ENCODE measurements at regions of chr13 and their contacts with region 1.

Region 1: GRCh38 chr13:57640582-57640981 is 9.0 kb downstream of the PCDH17 start:
- DNase-seq: no peak
- ATAC-seq: no peak

Region 2: GRCh38 chr13:56850852-56851251 is 789.7 kb before region 1 on chr13:
- intact Hi-C with region 1: no loop called
- DNase-seq: no peak
- ATAC-seq: no peak

Region 3: GRCh38 chr13:57507748-57508463 is 132.7 kb before region 1 on chr13:
- intact Hi-C with region 1: no loop called
- DNase-seq: no peak
- ATAC-seq: no peak

Region 4: DNA sequence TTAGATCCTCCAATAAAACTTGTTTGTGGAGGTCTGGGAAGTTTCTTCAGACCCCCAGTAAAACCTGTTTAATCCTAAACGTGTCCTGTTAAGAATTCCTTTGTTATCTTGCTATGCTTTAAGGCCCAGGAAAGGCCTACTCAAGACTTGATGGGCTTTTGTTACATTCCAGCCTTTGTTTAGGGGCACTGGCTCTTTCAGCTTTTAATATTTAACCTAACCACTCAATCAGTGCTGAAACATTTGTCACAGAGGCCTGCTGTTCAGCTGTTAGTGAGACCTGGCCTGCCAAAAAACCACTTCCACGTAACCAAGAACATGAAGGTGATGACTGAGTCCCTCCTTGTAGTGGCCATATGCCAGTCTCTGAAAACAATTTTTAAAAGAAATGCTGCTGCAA is 32.6 kb after region 1 on chr13:
- intact Hi-C with region 1: no loop called
- DNase-seq: no peak
- ATAC-seq: no peak

Region 5: DNA sequence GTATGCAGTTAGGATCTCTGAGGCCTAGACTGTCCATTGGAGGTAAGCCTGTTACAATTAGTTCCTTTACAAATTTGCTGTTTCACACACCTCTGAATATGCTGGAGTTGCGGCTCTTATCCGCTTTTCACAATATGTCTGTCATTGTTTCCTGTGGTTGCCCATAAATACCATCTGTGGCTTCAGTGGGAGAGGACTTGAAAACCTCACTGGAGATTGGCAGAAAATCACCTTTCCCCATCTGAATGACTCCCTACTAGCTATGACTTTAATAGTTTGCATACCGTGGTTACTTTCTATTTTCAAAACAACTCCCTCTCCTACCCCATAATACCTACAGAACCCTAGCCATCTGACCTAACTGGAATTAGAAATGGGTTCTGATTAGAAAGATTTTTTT is 445.2 kb after region 1 on chr13:
- intact Hi-C with region 1: no loop called
- DNase-seq: no peak
- ATAC-seq: no peak

Region 6: GRCh38 chr13:58884353-58885209 is 1244.0 kb after region 1 on chr13:
- intact Hi-C with region 1: loop called (anchors 5 kb)
- DNase-seq: no peak
- ATAC-seq: no peak